ENCODE measurements at regions of chr7 and their contacts with region 1.

Region 1: GRCh38 chr7:85851571-85852193 is 664.8 kb upstream of the SEMA3D start:
- DNase-seq: no peak

Region 2: GRCh38 chr7:85030893-85031292 is 820.8 kb before region 1 on chr7:
- intact Hi-C with region 1: loop called (anchors 5 kb)
- DNase-seq: no peak

Region 3: DNA sequence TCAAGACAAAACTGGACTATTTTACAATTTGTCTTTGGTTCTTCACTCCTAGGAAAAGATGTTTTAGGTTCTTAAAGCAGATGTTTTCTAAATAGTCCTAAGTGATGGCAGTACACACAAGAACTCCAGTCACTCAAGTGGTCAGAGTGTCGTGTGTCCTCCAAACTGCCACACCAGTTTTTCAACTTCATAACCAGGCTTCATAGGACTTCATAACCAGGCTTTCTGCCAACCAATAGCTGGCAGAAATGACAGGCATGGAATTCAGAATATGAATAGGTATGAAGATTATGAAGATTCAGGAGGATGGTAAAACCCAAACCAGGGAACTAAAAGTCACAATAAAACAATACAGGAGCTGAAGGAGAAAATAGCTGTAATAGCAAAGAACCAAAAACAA is 56.4 kb after region 1 on chr7:
- intact Hi-C with region 1: no loop called
- DNase-seq: no peak